CD4-positive, alpha-beta memory T cell (primary cell): ENCODE measurements at regions of chr7 and their contacts with region 1.

Region 1: DNA sequence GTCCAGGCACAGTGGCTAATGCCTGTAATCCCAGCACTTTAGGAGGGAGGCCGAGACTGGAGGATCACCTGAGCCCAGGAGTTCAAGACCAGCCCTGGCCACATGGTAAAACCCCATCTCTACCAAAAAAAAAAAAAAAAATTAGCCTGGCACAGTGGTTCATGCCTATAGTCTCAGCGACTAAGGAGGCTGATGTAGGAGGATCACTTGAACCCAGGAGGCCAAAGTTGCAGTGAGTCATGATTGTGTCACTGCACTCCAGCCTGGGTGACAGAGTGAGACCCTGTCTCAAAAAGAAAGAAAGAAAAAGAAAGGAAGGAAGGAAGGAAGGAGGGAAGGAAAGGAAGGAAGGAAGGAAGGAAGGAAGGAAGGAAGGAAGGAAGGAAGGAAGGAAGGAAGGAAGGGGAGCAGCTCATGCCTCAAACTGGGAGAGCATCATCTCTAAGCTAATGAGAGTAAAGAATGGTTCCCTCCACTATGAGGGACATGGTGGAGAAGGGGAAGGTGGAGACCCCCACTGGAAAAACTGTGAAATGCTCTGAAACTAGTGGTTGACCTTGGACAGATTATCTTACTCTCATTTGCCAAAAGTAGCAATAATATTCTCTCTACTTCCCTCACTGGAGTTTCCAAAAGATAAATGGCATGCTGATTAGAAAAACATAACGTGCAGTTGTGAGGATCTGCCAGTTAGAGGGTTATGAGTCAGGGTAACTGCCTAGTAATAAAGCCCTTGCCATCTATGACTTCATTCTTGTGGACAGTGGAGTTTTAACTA is 16.8 kb downstream of the GIMAP5 start:
- DNase-seq: peak in 1 of 5 donors; percentile 45
- H3K4me3 ChIP-seq: no peak overlapping the region
- H3K4me3 Mint-ChIP-seq: peak overlapping the region in 7 of 8 donors; percentile 8 to 76 (median 52)
- H3K27ac ChIP-seq: peak overlapping the region; percentile 37
- H3K27ac Mint-ChIP-seq: peak overlapping the region; percentile 90 to 97 (median 93)
- H3K4me1 ChIP-seq: peaks cover 80% of the 10 kb centered on the region
- H3K4me1 Mint-ChIP-seq: peaks cover 56 to 79% (median 68%) of the 10 kb centered on the region in 4 donors
- H3K27me3 ChIP-seq: no peaks in the 10 kb centered on the region
- H3K27me3 Mint-ChIP-seq: peaks cover 0 to 2% of the 10 kb centered on the region in 2 donors

Region 2: GRCh38 chr7:150356265-150356897 is 397.6 kb before region 1 on chr7:
- CTCF ChIA-PET with region 1: interaction called, 20 read pairs
- POLR2A ChIA-PET with region 1: interaction called, 13 read pairs
- intact Hi-C with region 1: loop called (anchors 1 kb)
- DNase-seq: peak in 4 of 5 donors; percentile 41 to 55 (median 53)
- H3K4me3 ChIP-seq: no peak overlapping the region
- H3K4me3 Mint-ChIP-seq: peak overlapping the region in 3 of 8 donors; percentile 8 to 69 (median 26)
- H3K27ac ChIP-seq: peak overlapping the region; percentile 6
- H3K27ac Mint-ChIP-seq: peak overlapping the region in 6 of 7 donors; percentile 13 to 60 (median 44)
- H3K4me1 ChIP-seq: peaks cover 27% of the 10 kb centered on the region
- H3K4me1 Mint-ChIP-seq: peaks cover 18 to 44% (median 32%) of the 10 kb centered on the region in 4 donors
- H3K27me3 ChIP-seq: no peaks in the 10 kb centered on the region
- H3K27me3 Mint-ChIP-seq: no peaks in the 10 kb centered on the region

Region 3: DNA sequence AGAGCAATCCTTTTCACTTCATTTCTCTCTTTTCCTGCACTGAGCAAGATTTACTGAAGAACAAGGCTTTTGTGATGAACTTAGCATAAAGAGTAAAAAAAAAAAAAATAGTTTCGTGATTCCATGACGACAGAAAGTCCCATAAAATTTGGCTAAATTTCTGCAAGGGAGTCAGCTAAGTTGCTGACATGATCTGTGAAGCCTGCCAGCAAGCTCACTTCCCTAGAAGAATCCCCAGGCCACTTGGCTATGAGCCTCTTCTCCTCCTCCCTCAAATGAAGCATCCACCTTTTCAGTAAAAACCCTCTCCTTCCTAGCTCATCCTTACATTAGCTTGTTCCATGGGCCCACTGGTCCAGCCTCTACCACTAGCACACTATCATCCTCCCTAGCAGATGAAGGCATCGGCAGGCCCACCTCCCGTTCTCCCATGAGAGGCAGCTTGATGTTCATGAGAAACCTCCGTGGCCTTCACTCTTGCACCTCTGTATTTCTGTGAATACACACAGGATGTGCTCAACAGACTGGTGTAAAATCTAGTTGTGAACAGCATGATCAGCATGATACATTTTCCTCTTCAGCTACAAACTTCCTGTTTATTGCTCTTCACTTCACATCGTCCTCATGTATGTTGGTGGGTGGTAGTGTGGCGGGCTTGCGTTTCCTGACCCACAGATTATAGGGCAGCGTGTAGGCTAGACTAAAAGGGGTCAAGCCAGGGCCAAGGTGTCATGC is 272.7 kb before region 1 on chr7:
- CTCF ChIA-PET with region 1: interaction called, 6 read pairs
- POLR2A ChIA-PET with region 1: interaction called, 93 read pairs
- intact Hi-C with region 1: no loop called
- DNase-seq: peak; percentile 63 to 87 (median 69)
- H3K4me3 ChIP-seq: peak overlapping the region in 1 of 2 donors; percentile 37
- H3K4me3 Mint-ChIP-seq: peak overlapping the region; percentile 80 to 90 (median 88)
- H3K27ac ChIP-seq: peak overlapping the region; percentile 71
- H3K27ac Mint-ChIP-seq: peak overlapping the region; percentile 96 to 100 (median 99)
- H3K4me1 ChIP-seq: peaks cover 99% of the 10 kb centered on the region
- H3K4me1 Mint-ChIP-seq: peaks cover 75 to 98% (median 91%) of the 10 kb centered on the region in 4 donors
- H3K27me3 ChIP-seq: no peaks in the 10 kb centered on the region
- H3K27me3 Mint-ChIP-seq: no peaks in the 10 kb centered on the region

Region 4: GRCh38 chr7:150514748-150515222 is 239.2 kb before region 1 on chr7 and contains the start of gene GIMAP7:
- CTCF ChIA-PET with region 1: interaction called, 19 read pairs
- POLR2A ChIA-PET with region 1: interaction called, 187 read pairs
- intact Hi-C with region 1: loop called (anchors 1 kb)
- DNase-seq: peak; percentile 77 to 84 (median 79)
- H3K4me3 ChIP-seq: peak within 1 kb of the TSS; percentile 92 to 99
- H3K4me3 Mint-ChIP-seq: peak within 1 kb of the TSS; percentile 97 to 100 (median 100)
- H3K27ac ChIP-seq: peak within 1 kb of the TSS; percentile 77
- H3K27ac Mint-ChIP-seq: peak within 1 kb of the TSS; percentile 94 to 99 (median 97)
- H3K4me1 ChIP-seq: peaks cover 47% of the 10 kb centered on the region
- H3K4me1 Mint-ChIP-seq: peaks cover 36 to 54% (median 42%) of the 10 kb centered on the region in 4 donors
- H3K27me3 ChIP-seq: no peaks in the 10 kb centered on the region
- H3K27me3 Mint-ChIP-seq: no peaks in the 10 kb centered on the region
- total RNA-seq, gene GIMAP7: 464 to 476 TPM

Region 5: DNA sequence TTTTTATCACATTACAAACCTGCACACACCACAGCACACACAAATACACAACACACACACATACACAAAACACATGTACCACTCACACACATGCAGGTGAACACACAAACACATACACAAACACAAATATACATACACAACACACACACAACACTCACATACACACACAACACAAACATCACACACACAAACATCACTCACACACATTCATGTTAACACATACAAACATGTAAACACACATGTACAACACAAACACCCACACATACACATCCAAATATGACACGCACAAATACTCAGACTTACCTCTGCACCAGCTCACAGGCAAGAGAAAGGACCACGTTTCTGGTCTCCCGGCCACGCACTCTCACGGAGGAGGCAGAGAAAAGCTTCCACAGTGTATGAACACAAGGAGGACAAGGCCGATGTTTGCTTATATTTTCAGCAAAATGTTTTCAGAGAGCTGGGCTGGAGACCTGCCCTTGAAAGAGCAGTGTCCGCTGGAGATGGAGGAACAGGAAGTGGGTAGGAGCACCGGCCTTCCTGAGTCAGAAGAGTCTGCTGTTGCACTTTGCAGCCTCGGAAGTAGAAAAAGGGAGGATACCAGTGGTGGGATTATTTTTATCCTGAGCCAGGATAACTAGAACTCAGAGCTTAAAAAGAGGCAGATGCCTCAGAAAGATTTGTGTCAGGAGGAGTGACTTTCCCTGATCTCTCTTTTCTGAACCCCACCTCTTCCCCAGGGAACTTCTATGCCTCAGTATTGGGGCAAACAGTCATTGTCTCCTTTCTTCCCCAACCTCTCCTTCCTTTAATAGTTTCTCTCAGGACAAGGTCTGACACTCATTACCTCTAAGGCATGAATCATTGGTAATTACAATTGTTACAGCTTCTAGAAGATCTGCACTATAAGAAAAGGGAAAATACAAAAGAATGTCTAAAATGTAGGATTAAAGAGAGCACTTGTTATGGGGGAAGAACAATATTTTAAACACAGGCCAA is 121.8 kb before region 1 on chr7 and contains the start of gene GIMAP6:
- CTCF ChIA-PET with region 1: interaction called, 10 read pairs
- POLR2A ChIA-PET with region 1: interaction called, 54 read pairs
- intact Hi-C with region 1: loop called (anchors 1 kb)
- DNase-seq: peak; percentile 36 to 51 (median 44)
- H3K4me3 ChIP-seq: peak within 1 kb of the TSS; percentile 69 to 75
- H3K4me3 Mint-ChIP-seq: peak within 1 kb of the TSS; percentile 93 to 100 (median 98)
- H3K27ac ChIP-seq: peak within 1 kb of the TSS; percentile 64
- H3K27ac Mint-ChIP-seq: peak within 1 kb of the TSS; percentile 81 to 99 (median 95)
- H3K4me1 ChIP-seq: peaks cover 79% of the 10 kb centered on the region
- H3K4me1 Mint-ChIP-seq: peaks cover 61 to 88% (median 74%) of the 10 kb centered on the region in 4 donors
- H3K27me3 ChIP-seq: no peaks in the 10 kb centered on the region
- H3K27me3 Mint-ChIP-seq: no peaks in the 10 kb centered on the region
- total RNA-seq, gene GIMAP6: 158 to 173 TPM

Region 6: DNA sequence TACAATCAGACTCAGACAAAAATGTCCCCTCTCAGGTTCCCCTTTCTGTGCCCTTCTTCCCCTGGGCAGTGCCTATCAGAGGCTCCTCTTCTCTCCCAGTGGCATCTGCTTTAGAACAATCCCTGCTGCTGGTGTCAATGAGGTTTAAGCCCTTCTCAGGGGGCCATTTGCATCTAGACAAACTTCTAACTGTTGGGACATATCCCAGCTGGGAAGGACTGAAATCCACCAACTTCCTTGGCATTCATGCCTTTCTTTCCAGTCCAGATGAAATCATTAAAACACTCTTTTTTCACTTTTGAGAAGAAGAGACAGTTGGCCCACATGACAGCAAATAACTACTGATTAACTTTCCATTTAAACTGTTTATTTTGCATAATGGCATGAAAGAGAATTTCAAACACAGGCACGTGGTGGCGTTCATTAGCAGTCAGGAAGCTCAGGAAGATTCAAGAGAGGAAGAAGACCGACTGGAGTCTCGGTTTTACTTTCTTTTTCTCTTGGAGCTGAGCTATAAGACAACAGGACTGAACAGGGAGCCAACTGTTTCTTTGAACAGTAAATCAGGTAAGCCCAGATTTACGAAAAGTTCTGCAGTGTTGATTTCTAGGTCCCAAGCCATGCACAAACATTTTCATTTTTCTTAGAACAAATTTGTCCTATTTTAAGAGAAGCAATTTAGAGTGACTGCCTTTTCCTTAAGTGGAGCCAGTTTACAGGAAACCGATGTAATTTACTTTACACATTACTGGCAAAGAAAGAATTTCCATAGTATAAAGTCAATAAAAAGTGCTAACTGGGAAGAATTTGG is 68.6 kb before region 1 on chr7 and contains the start of gene GIMAP2:
- CTCF ChIA-PET with region 1: interaction called, 13 read pairs
- POLR2A ChIA-PET with region 1: interaction called, 45 read pairs
- intact Hi-C with region 1: loop called (anchors 1 kb)
- DNase-seq: peak; percentile 64 to 69 (median 65)
- H3K4me3 ChIP-seq: peak within 1 kb of the TSS; percentile 80 to 97
- H3K4me3 Mint-ChIP-seq: peak within 1 kb of the TSS; percentile 94 to 99 (median 98)
- H3K27ac ChIP-seq: peak within 1 kb of the TSS; percentile 90
- H3K27ac Mint-ChIP-seq: peak within 1 kb of the TSS; percentile 90 to 99 (median 97)
- H3K4me1 ChIP-seq: peaks cover 60% of the 10 kb centered on the region
- H3K4me1 Mint-ChIP-seq: peaks cover 55 to 97% (median 74%) of the 10 kb centered on the region in 4 donors
- H3K27me3 ChIP-seq: no peaks in the 10 kb centered on the region
- H3K27me3 Mint-ChIP-seq: no peaks in the 10 kb centered on the region
- total RNA-seq, gene GIMAP2: 238 to 244 TPM

Region 7: GRCh38 chr7:150722431-150722931 is 31.5 kb before region 1 on chr7:
- CTCF ChIA-PET with region 1: interaction called, 29 read pairs
- POLR2A ChIA-PET with region 1: interaction called, 593 read pairs
- intact Hi-C with region 1: no loop called
- DNase-seq: peak in 1 of 5 donors; percentile 9
- H3K4me3 ChIP-seq: peak overlapping the region in 1 of 2 donors; percentile 6
- H3K4me3 Mint-ChIP-seq: peak overlapping the region; percentile 57 to 72 (median 66)
- H3K27ac ChIP-seq: no peak overlapping the region
- H3K27ac Mint-ChIP-seq: peak overlapping the region in 4 of 7 donors; percentile 38 to 80 (median 74)
- H3K4me1 ChIP-seq: peaks cover 57% of the 10 kb centered on the region
- H3K4me1 Mint-ChIP-seq: peaks cover 45 to 81% (median 57%) of the 10 kb centered on the region in 4 donors
- H3K27me3 ChIP-seq: no peaks in the 10 kb centered on the region
- H3K27me3 Mint-ChIP-seq: no peaks in the 10 kb centered on the region